ENCODE measurements at regions of chr2 and their contacts with region 1.

Region 1: GRCh38 chr2:235595422-235596010 is 101.7 kb downstream of the AGAP1 start:
- DNase-seq: peak; percentile 55
- H3K4me3 ChIP-seq: no peak overlapping the region
- H3K27ac ChIP-seq: no peak overlapping the region
- H3K4me1 ChIP-seq: no peaks in the 10 kb centered on the region
- CTCF ChIP-seq: peak; percentile 85

Region 2: GRCh38 chr2:235135990-235136561 is 459.4 kb before region 1 on chr2:
- CTCF ChIA-PET with region 1: no interaction called
- POLR2A ChIA-PET with region 1: no interaction called
- intact Hi-C with region 1: loop called (anchors 10 kb)
- DNase-seq: peak; percentile 27
- H3K4me3 ChIP-seq: no peak overlapping the region
- H3K27ac ChIP-seq: no peak overlapping the region
- H3K4me1 ChIP-seq: no peaks in the 10 kb centered on the region
- CTCF ChIP-seq: peak; percentile 74

Region 3: GRCh38 chr2:235746257-235747084 is 151.0 kb after region 1 on chr2:
- CTCF ChIA-PET with region 1: interaction called, 4 read pairs
- POLR2A ChIA-PET with region 1: no interaction called
- intact Hi-C with region 1: loop called (anchors 1 kb)
- DNase-seq: peak; percentile 71
- H3K4me3 ChIP-seq: no peak overlapping the region
- H3K27ac ChIP-seq: no peak overlapping the region
- H3K4me1 ChIP-seq: no peaks in the 10 kb centered on the region
- CTCF ChIP-seq: peak; percentile 84

Measured in OCI-LY7 (cell line).